ENCODE measurements at regions of chr11 and their contacts with region 1.

Region 1: GRCh38 chr11:25566298-25567200 is 765.4 kb upstream of the ANO3 start:
- DNase-seq: peak in 1 of 2 experiments; percentile 16
- H3K4me3 ChIP-seq: no peak overlapping the region
- H3K27ac ChIP-seq: no peak overlapping the region
- H3K4me1 ChIP-seq: no peaks in the 10 kb centered on the region
- H3K27me3 ChIP-seq: no peaks in the 10 kb centered on the region
- CTCF ChIP-seq: no peak

Region 2: GRCh38 chr11:25483915-25484635 is 82.5 kb before region 1 on chr11:
- CTCF ChIA-PET with region 1: no interaction called
- POLR2A ChIA-PET with region 1: no interaction called
- intact Hi-C with region 1: loop called (anchors 5 kb)
- DNase-seq: no peak
- H3K4me3 ChIP-seq: no peak overlapping the region
- H3K27ac ChIP-seq: no peak overlapping the region
- H3K4me1 ChIP-seq: no peaks in the 10 kb centered on the region
- H3K27me3 ChIP-seq: no peaks in the 10 kb centered on the region
- CTCF ChIP-seq: no peak

Region 3: GRCh38 chr11:25612806-25613205 is 46.3 kb after region 1 on chr11:
- CTCF ChIA-PET with region 1: no interaction called
- POLR2A ChIA-PET with region 1: no interaction called
- intact Hi-C with region 1: no loop called
- DNase-seq: no peak
- H3K4me3 ChIP-seq: no peak overlapping the region
- H3K27ac ChIP-seq: no peak overlapping the region
- H3K4me1 ChIP-seq: no peaks in the 10 kb centered on the region
- H3K27me3 ChIP-seq: no peaks in the 10 kb centered on the region
- CTCF ChIP-seq: no peak